Transverse colon (tissue), 4 donors: ENCODE measurements at regions of chr3 and their contacts with region 1.

Region 1: GRCh38 chr3:2589336-2589969 is 490.8 kb downstream of the CNTN4 start:
- DNase-seq: no peak
- H3K4me3 ChIP-seq: no peak overlapping the region
- H3K27ac ChIP-seq: no peak overlapping the region
- H3K4me1 ChIP-seq: peaks cover 0 to 6% (median 0%) of the 10 kb centered on the region in 4 donors
- H3K27me3 ChIP-seq: no peaks in the 10 kb centered on the region
- CTCF ChIP-seq: no peak
- EP300 ChIP-seq: no peak
- POLR2A ChIP-seq: no peak

Region 2: GRCh38 chr3:2517500-2518172 is 71.8 kb before region 1 on chr3:
- in situ Hi-C with region 1: no loop called
- intact Hi-C with region 1: loop called (anchors 2 kb)
- DNase-seq: no peak
- H3K4me3 ChIP-seq: no peak overlapping the region
- H3K27ac ChIP-seq: no peak overlapping the region
- H3K4me1 ChIP-seq: no peaks in the 10 kb centered on the region
- H3K27me3 ChIP-seq: no peaks in the 10 kb centered on the region
- CTCF ChIP-seq: no peak
- EP300 ChIP-seq: no peak
- POLR2A ChIP-seq: no peak

Region 3: GRCh38 chr3:3023111-3023745 is 433.8 kb after region 1 on chr3:
- in situ Hi-C with region 1: no loop called
- intact Hi-C with region 1: no loop called
- DNase-seq: no peak
- H3K4me3 ChIP-seq: no peak overlapping the region
- H3K27ac ChIP-seq: no peak overlapping the region
- H3K4me1 ChIP-seq: no peaks in the 10 kb centered on the region
- H3K27me3 ChIP-seq: no peaks in the 10 kb centered on the region
- CTCF ChIP-seq: no peak
- EP300 ChIP-seq: no peak
- POLR2A ChIP-seq: no peak